ENCODE measurements at regions of chr14 and their contacts with region 1.

Region 1: DNA sequence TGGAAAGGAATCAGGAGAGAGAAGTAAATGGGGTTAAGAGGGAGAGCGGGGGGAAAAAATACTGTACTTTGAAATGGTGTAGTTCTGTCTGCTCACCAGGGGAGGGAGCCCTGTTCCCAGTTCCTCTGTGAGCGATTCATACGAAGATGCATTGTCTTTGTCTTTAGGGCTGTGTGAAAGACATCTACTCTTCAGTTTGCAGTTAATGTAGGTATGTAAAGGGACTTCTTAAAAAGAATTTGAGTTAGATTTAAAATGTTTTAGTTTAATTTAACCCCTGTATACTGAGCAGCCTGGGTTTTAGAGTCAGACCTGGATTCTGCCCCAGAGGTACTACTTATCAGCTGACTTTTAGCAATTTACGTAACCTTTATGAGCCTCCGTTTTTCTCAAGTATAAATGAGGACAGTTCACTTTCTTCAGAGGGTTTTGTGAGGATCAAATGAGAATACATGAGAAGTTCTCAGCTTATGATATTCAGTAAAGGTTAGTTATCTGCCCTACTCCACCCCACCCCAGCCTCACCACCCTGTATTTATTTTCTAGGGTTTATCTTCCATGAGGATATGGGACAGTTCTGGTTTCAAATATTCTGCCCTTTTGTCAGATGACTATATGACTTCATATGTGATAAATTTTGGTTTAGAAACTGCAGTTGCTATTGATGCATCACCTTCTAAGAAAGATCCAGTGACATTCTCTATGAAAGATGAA is 82.5 kb upstream of the EVL start:
- DNase-seq: peak; percentile 48 to 86
- H3K4me3 ChIP-seq: no peak overlapping the region
- H3K27ac ChIP-seq: no peak overlapping the region
- H3K4me1 ChIP-seq: peaks cover 19 to 45% (median 31%) of the 10 kb centered on the region in 4 donors
- H3K27me3 ChIP-seq: no peaks in the 10 kb centered on the region
- CTCF ChIP-seq: peak in 5 of 7 experiments; percentile 74 to 86 (median 77)
- EP300 ChIP-seq: no peak
- POLR2A ChIP-seq: no peak

Region 2: DNA sequence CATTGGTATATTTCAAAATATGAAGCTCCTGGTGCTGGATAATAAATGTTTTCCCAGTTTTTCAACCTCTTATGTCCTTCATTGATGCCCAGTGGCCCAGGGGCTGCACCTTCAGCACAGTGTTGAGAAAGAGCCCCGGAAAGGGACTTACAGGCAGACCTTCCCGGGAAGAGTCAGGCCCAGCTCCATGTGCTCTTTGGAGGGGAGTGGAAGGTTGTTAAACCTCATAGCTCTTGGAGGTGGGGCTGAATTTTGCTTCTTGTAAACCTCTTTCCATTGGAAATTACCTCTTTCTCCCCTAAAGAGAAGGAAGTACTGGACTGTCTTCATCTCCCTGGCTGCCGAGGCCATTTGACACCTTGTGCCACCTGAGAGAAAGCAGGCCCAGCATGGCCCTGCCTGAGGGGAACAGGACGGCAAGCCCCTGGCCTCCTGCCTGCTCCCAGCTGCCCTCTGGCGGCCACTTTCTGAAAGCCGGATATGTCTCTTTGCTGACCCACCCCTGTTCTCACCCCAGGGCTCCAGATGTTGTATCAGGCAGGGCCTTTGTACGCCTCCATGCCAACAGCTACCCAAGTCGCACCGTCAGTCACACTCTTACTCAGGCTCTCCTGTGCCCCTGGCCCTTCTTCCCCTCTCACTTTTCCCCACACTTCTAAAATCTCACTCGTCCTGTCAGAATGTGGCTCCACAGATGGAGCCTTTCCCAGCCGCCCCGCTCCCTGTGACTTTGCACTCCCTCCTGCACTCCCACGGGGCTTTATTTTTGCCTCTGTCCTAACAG is 125.5 kb after region 1 on chr14:
- intact Hi-C with region 1: loop called (anchors 5 kb)
- DNase-seq: peak; percentile 88 to 92
- H3K4me3 ChIP-seq: no peak overlapping the region
- H3K27ac ChIP-seq: peak overlapping the region in 3 of 5 donors; percentile 11 to 40 (median 20)
- H3K4me1 ChIP-seq: peaks cover 21 to 67% (median 51%) of the 10 kb centered on the region in 4 donors
- H3K27me3 ChIP-seq: no peaks in the 10 kb centered on the region
- CTCF ChIP-seq: peak in 5 of 7 experiments; percentile 80 to 90 (median 86)
- EP300 ChIP-seq: no peak
- POLR2A ChIP-seq: no peak

Region 3: DNA sequence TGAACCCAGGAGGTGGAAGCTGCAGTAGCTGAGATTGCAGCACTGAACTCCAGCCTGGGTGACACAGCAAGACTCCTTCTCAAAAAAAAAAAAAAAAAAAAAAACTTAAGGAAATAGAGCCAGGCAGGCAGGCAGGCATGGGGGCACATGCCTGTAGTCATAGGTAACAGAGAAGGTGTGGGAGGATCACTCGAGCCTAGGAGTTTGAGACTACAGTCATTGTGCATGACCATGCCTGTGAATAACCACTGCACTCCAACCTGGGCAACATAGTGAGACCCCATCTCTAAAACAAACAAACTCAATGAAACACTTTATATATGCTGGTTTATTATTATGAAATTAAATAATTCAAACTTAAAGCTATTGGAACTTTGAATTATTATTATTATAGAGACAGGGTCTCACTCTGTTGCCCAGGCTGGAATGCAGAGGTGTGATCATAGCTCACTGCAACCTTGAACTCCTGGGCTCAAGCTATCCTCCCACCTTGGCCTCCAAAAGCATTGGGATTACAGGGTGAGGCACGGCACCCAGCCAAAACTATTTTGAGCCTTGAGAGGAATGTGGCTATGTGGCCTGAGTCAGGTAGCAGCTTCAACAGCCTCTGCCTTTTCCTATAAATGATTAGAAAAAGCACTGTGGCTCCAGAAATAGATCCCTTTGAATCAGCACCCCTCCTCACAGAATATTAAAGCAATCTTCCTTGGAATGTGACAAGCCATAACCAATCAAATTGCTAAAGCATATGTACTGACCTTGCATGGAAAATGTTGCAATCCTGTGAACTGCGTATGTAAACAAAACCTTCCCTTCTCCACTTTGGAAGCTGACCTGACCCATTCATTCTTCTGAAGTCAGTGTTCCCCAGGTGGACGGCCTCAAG is 221.5 kb after region 1 on chr14:
- intact Hi-C with region 1: loop called (anchors 10 kb)
- DNase-seq: peak; percentile 63 to 71
- H3K4me3 ChIP-seq: no peak overlapping the region
- H3K27ac ChIP-seq: peak overlapping the region; percentile 26 to 66 (median 60)
- H3K4me1 ChIP-seq: peaks cover 0 to 18% (median 15%) of the 10 kb centered on the region in 4 donors
- H3K27me3 ChIP-seq: no peaks in the 10 kb centered on the region
- CTCF ChIP-seq: no peak
- EP300 ChIP-seq: no peak
- POLR2A ChIP-seq: no peak